ENCODE measurements at regions of chr1 and their contacts with region 1.

Region 1: DNA sequence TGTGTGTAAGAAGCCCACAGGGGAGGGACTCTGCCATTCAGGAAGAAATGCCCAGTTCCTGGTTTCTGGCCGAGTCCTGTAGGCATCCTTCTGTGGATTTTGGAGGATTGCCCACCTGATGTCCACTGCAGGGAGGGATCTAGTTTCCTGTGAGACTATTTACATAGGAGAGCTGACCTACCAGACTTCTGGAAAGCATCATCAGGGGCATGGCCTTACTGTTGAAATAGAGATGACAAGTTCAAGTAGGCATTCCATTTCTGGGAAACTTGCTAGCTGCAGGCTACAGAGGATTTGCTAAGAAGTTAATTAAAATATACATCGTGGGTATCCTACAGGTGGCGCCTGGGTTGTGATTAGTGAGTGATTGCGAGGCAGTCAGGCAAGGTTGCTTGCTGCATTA is 148.7 kb downstream of the HHAT start:
- DNase-seq: peak; percentile 88
- H3K4me3 Mint-ChIP-seq: no peak overlapping the region
- H3K27ac Mint-ChIP-seq: no peak overlapping the region
- H3K4me1 Mint-ChIP-seq: no peaks in the 10 kb centered on the region
- H3K27me3 Mint-ChIP-seq: peaks cover 13% of the 10 kb centered on the region
- CTCF ChIP-seq: no peak

Region 2: DNA sequence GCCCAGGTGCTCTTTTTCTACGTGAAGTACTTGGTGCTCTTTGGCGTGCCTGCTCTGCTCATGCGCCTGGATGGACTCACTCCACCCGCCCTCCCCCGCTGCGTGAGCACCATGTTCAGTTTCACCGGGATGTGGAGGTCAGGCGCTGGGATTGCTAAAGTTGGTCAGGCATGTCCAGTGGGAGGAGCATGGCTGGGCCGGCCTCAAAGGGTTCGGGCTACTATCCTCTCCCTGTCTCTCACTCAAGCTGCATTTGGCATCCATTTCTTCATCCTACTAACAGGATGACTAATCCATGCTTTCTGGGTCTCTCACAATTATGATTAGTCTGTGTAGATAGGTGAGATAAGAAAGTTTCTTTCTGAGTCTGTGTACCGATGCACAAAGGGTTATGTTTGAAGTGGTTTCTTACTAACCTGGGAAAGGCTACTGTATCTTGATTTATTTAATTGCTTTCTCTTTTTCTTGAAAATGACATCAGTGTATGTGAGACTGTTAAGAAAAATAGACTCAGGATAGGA is 12.8 kb before region 1 on chr1:
- CTCF ChIA-PET with region 1: interaction called, 5 read pairs
- POLR2A ChIA-PET with region 1: no interaction called
- intact Hi-C with region 1: loop called (anchors 2 kb)
- DNase-seq: peak; percentile 63
- H3K4me3 Mint-ChIP-seq: no peak overlapping the region
- H3K27ac Mint-ChIP-seq: no peak overlapping the region
- H3K4me1 Mint-ChIP-seq: peaks cover 6% of the 10 kb centered on the region
- H3K27me3 Mint-ChIP-seq: no peaks in the 10 kb centered on the region
- CTCF ChIP-seq: no peak

Region 3: DNA sequence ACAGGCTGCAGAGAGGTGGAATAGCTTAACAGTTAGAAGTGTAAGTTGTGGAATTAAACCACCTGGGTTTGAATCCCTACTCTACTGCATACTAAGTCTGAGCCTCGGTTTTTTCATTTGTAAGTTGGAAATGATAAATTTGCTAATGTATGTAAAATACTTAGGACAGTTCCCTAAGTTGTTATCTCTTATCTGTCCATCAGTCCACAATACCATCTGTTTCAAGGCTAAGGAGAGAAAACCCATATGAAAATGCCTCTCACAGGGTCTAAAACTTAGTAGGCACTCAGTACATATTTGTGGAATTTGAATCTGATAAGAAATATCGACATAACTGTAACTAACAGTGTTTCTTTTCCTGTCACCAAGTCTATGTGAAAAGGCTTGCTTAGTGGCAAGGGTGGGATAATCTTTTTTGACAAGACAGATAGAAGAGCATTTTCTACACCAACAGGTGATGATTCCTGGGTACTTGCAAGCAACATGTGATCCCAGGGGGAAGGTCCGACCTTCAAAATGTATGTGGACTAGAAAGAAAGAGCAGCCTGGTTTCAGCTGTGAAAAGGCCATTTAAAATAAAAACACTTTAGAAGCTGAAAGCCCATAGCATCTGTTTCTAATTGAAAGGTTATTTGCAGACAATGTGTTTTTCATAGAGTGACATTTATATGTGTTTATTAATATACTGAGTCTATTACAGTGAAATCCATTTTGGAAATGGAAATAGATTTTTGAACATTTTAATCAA is 54.3 kb after region 1 on chr1:
- CTCF ChIA-PET with region 1: no interaction called
- POLR2A ChIA-PET with region 1: interaction called, 3 read pairs
- intact Hi-C with region 1: loop called (anchors 5 kb)
- DNase-seq: no peak
- H3K4me3 Mint-ChIP-seq: no peak overlapping the region
- H3K27ac Mint-ChIP-seq: no peak overlapping the region
- H3K4me1 Mint-ChIP-seq: no peaks in the 10 kb centered on the region
- H3K27me3 Mint-ChIP-seq: peaks cover 8% of the 10 kb centered on the region
- CTCF ChIP-seq: no peak